Mammary epithelial cell (primary cell): ENCODE measurements at regions of chr3 and their contacts with region 1.

Region 1: DNA sequence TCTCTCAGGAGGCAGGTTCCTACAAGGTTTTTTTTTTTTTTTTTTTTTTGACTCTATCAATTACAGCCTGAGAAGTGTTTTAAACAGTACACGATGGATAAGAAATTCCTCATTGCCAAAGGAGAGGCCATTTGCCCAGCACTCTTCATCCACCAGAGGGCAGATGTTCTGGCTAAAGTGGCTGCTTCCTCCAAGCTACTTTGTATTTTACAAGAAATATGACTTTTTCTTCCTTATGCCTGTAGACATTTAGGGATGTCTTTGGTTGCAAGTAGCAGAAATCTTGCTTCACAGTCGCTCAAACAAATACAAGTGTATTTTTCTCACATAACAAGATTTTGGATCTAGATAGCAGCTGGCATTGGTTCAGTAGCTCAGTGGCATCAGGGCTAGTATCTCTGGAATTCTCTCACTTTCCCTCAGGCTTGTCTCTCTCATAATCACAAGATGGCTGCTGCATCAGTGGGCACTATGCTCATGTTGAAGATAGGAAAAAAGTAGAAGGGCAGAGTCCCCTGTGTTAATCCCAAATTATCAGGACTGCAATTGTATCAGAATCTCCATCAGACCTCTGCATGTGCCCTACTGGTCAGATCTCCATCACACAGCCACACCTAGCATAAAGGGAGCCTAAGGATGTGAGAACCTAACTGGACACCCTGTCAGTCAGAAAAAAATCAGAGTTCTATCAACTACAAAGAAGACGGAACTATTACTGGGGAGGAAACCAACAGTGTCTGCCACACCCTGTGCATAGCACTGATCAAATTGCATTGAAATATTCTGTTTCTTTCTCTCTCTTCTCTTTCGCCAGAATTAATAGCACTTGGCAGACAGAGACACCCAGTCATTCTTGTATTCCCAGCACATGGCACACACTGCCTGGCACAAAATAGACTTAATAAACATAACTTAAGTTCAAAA is 138.9 kb upstream of the COL8A1 start:
- DNase-seq: peak; percentile 28
- H3K4me3 ChIP-seq: no peak overlapping the region
- H3K27ac ChIP-seq: no peak overlapping the region
- H3K4me1 ChIP-seq: no peaks in the 10 kb centered on the region
- H3K27me3 ChIP-seq: no peaks in the 10 kb centered on the region
- CTCF ChIP-seq: peak; percentile 84 to 88

Region 2: GRCh38 chr3:99218468-99218867 is 281.0 kb before region 1 on chr3:
- CTCF ChIA-PET with region 1: no interaction called
- dilution Hi-C with region 1: no loop called
- in situ Hi-C with region 1: no loop called
- intact Hi-C with region 1: no loop called
- DNase-seq: no peak
- H3K4me3 ChIP-seq: no peak overlapping the region
- H3K27ac ChIP-seq: no peak overlapping the region
- H3K4me1 ChIP-seq: no peaks in the 10 kb centered on the region
- H3K27me3 ChIP-seq: no peaks in the 10 kb centered on the region
- CTCF ChIP-seq: no peak

Region 3: GRCh38 chr3:99396651-99397261 is 102.7 kb before region 1 on chr3:
- CTCF ChIA-PET with region 1: no interaction called
- dilution Hi-C with region 1: no loop called
- in situ Hi-C with region 1: no loop called
- intact Hi-C with region 1: no loop called
- DNase-seq: no peak
- H3K4me3 ChIP-seq: no peak overlapping the region
- H3K27ac ChIP-seq: no peak overlapping the region
- H3K4me1 ChIP-seq: peaks cover 33% of the 10 kb centered on the region
- H3K27me3 ChIP-seq: no peaks in the 10 kb centered on the region
- CTCF ChIP-seq: no peak

Region 4: DNA sequence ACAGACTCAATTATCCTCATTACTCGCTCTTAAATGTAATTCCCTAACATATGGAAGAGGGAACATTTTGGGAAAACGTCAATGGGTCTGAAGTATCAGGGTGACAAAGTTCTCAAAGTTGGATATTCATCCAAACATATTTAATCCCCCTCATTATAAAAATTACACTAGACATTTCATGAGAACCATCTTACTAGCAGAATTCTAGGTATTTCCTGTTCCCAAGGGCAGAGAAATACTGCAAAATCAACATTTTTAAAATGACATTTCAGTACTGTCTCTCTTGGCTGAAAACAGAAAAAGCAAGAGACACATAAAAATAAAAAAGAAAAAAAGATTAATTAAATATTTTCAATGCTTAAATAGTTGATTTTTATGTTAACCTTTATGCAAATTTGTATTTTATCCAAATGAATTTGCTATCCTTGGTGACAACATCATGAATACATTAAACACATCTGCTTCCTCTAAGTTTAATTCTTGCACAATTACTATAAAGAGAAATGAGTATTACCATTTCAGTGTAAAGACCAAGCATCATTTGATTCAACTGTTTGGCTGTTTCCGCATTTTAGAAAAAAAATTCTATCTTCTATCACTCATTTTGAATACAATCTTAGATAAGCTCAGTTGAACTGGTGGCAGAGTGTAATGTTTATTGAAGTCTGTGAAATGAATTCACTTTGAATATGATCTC is 24.1 kb after region 1 on chr3:
- CTCF ChIA-PET with region 1: no interaction called
- dilution Hi-C with region 1: no loop called
- in situ Hi-C with region 1: no loop called
- intact Hi-C with region 1: no loop called
- DNase-seq: no peak
- H3K4me3 ChIP-seq: no peak overlapping the region
- H3K27ac ChIP-seq: no peak overlapping the region
- H3K4me1 ChIP-seq: no peaks in the 10 kb centered on the region
- H3K27me3 ChIP-seq: no peaks in the 10 kb centered on the region
- CTCF ChIP-seq: no peak

Region 5: DNA sequence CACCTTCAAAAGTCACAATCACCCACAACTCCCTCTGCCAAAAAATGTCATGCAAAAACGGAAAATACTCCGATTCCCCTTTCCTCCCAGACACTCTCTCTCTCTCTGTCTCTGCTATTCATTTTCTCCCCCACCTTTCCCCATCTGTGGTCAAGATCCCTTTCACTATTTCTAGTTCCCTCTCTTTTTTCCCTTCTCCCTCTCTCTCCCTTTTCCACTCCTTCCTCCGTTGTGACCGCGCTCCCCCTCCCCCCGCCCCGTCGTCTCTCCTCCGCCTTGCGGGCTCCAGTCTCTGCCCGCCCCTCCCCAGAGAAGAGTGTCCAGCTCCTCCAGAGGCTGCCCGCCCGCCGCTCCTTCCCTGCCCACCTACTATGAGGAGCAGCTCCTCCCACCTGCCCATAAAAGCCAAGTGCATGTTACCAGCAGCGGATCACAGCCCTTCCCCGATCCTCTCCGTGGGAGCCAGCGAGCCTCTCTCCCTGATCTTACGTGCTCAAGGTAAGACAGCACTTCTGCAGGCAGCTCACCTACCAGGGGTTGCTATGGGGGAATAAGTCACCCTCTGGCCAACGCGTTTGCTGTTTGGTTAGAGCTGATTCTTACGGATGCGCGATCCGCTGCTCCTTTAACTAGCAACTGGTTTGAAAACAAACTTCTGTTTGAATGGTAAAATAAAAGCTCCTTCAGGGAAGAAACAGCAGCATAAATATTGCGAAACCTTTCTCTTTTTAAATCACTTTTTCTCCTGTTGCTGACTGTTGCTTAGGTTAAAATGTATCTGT is 138.9 kb after region 1 on chr3 and contains the start of gene COL8A1:
- CTCF ChIA-PET with region 1: interaction called, 29 read pairs
- dilution Hi-C with region 1: no loop called
- in situ Hi-C with region 1: no loop called
- intact Hi-C with region 1: loop called (anchors 1 kb)
- DNase-seq: peak; percentile 83
- H3K4me3 ChIP-seq: peak within 1 kb of the TSS; percentile 48 to 71 (median 67)
- H3K27ac ChIP-seq: peak within 1 kb of the TSS; percentile 84
- H3K4me1 ChIP-seq: peaks cover 28% of the 10 kb centered on the region
- H3K27me3 ChIP-seq: no peaks in the 10 kb centered on the region
- CTCF ChIP-seq: no peak
- total RNA-seq, gene COL8A1: 11.9 to 73.2 TPM

Region 6: DNA sequence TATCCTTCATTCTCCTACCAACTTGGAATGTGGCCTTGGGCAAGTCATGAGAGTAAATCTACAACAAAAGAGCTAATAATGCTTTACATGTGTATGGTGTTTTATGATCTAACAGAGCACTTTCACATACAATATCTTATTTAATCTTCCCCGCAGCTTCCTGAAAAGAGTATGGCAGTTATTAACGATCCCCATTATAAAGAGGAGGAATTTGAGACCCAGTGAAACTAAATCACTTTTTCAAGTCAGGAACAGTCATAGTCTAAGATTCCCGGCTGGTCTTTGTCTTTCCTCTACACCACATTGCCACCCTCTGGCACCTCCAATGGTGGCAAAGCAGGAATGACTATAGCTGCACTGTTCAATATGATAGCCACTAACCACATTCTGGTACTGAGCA is 248.4 kb after region 1 on chr3:
- CTCF ChIA-PET with region 1: no interaction called
- dilution Hi-C with region 1: no loop called
- in situ Hi-C with region 1: loop called in 1 of 2 experiments (anchors 25 kb)
- intact Hi-C with region 1: loop called (anchors 1 kb)
- DNase-seq: peak; percentile 55
- H3K4me3 ChIP-seq: no peak overlapping the region
- H3K27ac ChIP-seq: peak overlapping the region; percentile 47
- H3K4me1 ChIP-seq: peaks cover 25% of the 10 kb centered on the region
- H3K27me3 ChIP-seq: no peaks in the 10 kb centered on the region
- CTCF ChIP-seq: peak; percentile 46 to 68